ENCODE measurements at regions of chr5 and their contacts with region 1.

Region 1: GRCh38 chr5:37767251-37767650 is 72.6 kb downstream of the GDNF start:
- DNase-seq: no peak
- H3K4me3 ChIP-seq: no peak overlapping the region
- H3K27ac ChIP-seq: no peak overlapping the region
- H3K4me1 ChIP-seq: peaks cover 22% of the 10 kb centered on the region
- H3K27me3 ChIP-seq: no peaks in the 10 kb centered on the region
- CTCF ChIP-seq: no peak

Region 2: GRCh38 chr5:37604290-37604689 is 163.0 kb before region 1 on chr5:
- CTCF ChIA-PET with region 1: no interaction called
- POLR2A ChIA-PET with region 1: no interaction called
- intact Hi-C with region 1: no loop called
- DNase-seq: no peak
- H3K4me3 ChIP-seq: no peak overlapping the region
- H3K27ac ChIP-seq: no peak overlapping the region
- H3K4me1 ChIP-seq: no peaks in the 10 kb centered on the region
- H3K27me3 ChIP-seq: no peaks in the 10 kb centered on the region
- CTCF ChIP-seq: no peak

Region 3: GRCh38 chr5:37657046-37657445 is 110.2 kb before region 1 on chr5:
- CTCF ChIA-PET with region 1: no interaction called
- POLR2A ChIA-PET with region 1: no interaction called
- intact Hi-C with region 1: no loop called
- DNase-seq: no peak
- H3K4me3 ChIP-seq: no peak overlapping the region
- H3K27ac ChIP-seq: no peak overlapping the region
- H3K4me1 ChIP-seq: peaks cover 21% of the 10 kb centered on the region
- H3K27me3 ChIP-seq: no peaks in the 10 kb centered on the region
- CTCF ChIP-seq: no peak

Region 4: DNA sequence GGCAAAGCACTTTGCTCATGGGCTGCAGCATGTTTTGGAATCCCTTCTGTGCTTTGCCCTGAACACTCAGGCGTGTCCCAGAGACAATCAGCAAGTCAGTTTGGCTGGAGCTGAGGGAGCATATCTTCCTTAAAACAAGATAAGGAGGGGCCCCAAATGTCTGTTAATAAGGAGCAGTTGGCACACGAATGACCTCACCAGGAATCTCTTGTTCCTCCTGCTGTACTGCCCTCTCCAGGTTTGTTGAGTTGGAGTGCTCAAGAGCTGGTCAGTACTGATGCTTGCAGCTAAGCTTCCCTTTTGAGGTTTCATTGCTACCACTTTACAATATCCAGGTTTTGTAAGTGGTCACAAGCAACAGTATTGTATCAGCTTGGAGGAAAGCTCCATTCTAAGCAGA is 389.8 kb after region 1 on chr5:
- CTCF ChIA-PET with region 1: no interaction called
- POLR2A ChIA-PET with region 1: interaction called, 15 read pairs
- intact Hi-C with region 1: no loop called
- DNase-seq: no peak
- H3K4me3 ChIP-seq: no peak overlapping the region
- H3K27ac ChIP-seq: no peak overlapping the region
- H3K4me1 ChIP-seq: no peaks in the 10 kb centered on the region
- H3K27me3 ChIP-seq: peaks cover 28% of the 10 kb centered on the region; the same call in 1 of the 2 replicates
- CTCF ChIP-seq: no peak

Measured in PC-9 (cell line).